CD14-positive monocyte (primary cell): ENCODE measurements at regions of chr7 and their contacts with region 1.

Region 1: GRCh38 chr7:131107337-131108211 is 220.1 kb upstream of the MKLN1 start:
- DNase-seq: peak; percentile 80 to 86 (median 84)
- H3K4me3 ChIP-seq: peak overlapping the region; percentile 83 to 100 (median 99)
- H3K4me3 Mint-ChIP-seq: peak overlapping the region; percentile 99
- H3K27ac ChIP-seq: peak overlapping the region; percentile 93 to 95
- H3K27ac Mint-ChIP-seq: peak overlapping the region; percentile 92 to 99 (median 98)
- H3K4me1 ChIP-seq: peaks cover 45 to 54% of the 10 kb centered on the region in 2 donors
- H3K4me1 Mint-ChIP-seq: peaks cover 58% of the 10 kb centered on the region
- H3K27me3 ChIP-seq: peaks cover 0 to 10% of the 10 kb centered on the region in 2 donors
- H3K27me3 Mint-ChIP-seq: peaks cover 4 to 17% (median 11%) of the 10 kb centered on the region in 3 donors
- CTCF ChIP-seq: no peak

Region 2: GRCh38 chr7:130951303-130951975 is 156.1 kb before region 1 on chr7:
- intact Hi-C with region 1: no loop called
- DNase-seq: no peak
- H3K4me3 ChIP-seq: no peak overlapping the region
- H3K4me3 Mint-ChIP-seq: no peak overlapping the region
- H3K27ac ChIP-seq: no peak overlapping the region
- H3K27ac Mint-ChIP-seq: peak overlapping the region in 1 of 7 donors; percentile 9
- H3K4me1 ChIP-seq: peaks cover under 1 to 3% of the 10 kb centered on the region in 2 donors
- H3K4me1 Mint-ChIP-seq: peaks cover 13% of the 10 kb centered on the region
- H3K27me3 ChIP-seq: no peaks in the 10 kb centered on the region
- H3K27me3 Mint-ChIP-seq: no peaks in the 10 kb centered on the region
- CTCF ChIP-seq: no peak

Region 3: DNA sequence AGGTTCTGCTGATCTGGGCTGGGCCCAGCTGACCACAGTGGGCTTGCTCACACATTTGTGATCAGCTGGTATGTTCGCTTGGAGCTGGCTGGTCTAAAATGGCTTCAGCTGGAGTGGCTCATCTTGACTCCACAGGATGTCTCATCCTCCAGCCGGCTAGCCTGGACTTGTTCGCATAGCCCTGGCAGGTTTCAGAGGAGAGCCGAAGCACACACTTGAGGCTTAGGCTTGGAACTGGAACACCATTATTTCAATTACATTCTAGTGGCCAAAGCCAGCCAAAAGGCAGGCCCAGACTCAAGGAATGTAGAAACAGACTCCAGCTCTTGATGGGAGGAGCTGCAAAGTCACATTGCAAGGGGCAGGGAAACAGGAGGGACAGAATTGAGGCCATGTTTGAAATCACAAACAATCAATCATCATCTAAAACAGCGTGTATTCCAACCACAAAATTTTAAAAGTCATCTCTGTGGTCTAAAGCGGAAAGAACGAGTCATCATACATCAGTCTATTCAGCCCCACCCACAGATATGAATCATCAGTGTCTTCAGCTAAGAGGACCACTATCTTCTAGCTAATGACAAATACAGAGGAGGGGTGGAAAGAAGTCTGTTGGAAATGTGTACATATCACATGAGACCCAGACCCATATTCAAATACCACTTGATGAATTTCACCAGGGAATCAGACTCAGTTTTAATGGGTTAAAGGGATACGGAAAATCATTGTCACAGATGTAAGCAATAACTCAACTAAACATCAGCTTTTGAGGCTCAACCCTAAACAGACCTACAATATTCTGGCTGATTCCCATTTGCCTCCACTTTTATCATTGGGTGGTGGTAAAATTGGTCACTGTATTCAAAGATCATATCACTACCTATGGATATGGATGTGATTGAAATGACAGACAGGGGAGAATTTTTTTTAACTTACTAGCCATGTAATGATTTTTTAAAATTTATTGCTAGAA is 81.1 kb after region 1 on chr7:
- intact Hi-C with region 1: loop called in 1 of 2 experiments (anchors 5 kb)
- DNase-seq: peak; percentile 91 to 98 (median 96)
- H3K4me3 ChIP-seq: no peak overlapping the region
- H3K4me3 Mint-ChIP-seq: peak overlapping the region in 1 of 2 donors; percentile 62
- H3K27ac ChIP-seq: peak overlapping the region; percentile 62 to 85
- H3K27ac Mint-ChIP-seq: peak overlapping the region; percentile 89 to 96 (median 94)
- H3K4me1 ChIP-seq: peaks cover 18 to 35% of the 10 kb centered on the region in 2 donors
- H3K4me1 Mint-ChIP-seq: peaks cover 37% of the 10 kb centered on the region
- H3K27me3 ChIP-seq: peaks cover 11 to 24% of the 10 kb centered on the region in 2 donors
- H3K27me3 Mint-ChIP-seq: peaks cover 28 to 40% (median 33%) of the 10 kb centered on the region in 3 donors
- CTCF ChIP-seq: no peak

Region 4: DNA sequence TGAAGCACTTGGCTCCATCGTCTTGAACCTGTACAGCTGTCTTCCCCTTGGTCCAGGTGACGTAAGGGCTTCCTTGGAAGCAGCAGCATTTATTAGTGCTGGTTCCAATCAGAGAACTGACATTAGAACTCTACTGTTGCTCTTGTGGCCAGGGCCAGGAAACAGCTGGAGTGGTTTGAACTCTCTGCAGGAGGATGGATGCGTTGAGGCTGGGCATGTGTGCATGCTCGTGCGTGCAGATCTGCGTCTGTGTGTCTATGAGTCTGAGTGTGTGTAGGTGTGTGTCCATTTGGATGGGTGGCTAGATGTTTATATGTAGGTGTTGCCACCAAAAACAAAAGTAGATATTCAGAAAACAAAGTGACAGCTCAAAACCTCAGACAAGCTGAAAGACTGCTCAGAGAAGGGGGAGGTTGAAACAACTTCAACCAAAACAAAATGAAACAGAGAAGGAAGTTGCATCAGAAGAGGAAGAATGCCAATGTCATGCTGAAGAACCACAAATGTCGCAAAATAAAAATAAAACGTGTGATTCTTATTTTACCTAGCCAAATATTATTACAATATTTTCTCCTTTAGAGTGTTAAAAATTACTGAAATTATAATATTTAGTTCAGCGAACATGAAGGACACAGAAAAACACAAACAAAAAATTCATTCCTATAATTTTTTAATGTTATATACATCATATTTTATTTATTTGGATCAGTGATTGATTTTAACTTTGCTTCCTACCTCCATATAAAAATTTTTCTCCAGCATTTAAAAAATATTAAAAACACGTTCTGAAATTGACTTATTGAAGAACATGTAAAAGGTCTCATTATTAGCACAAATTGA is 124.0 kb after region 1 on chr7:
- intact Hi-C with region 1: loop called (anchors 5 kb)
- DNase-seq: peak; percentile 67 to 85 (median 69)
- H3K4me3 ChIP-seq: peak overlapping the region; percentile 36 to 68 (median 39)
- H3K4me3 Mint-ChIP-seq: peak overlapping the region; percentile 60 to 88
- H3K27ac ChIP-seq: peak overlapping the region; percentile 95 to 96
- H3K27ac Mint-ChIP-seq: peak overlapping the region; percentile 95 to 100 (median 96)
- H3K4me1 ChIP-seq: peaks cover 28 to 46% of the 10 kb centered on the region in 2 donors
- H3K4me1 Mint-ChIP-seq: peaks cover 53% of the 10 kb centered on the region
- H3K27me3 ChIP-seq: no peaks in the 10 kb centered on the region
- H3K27me3 Mint-ChIP-seq: peaks cover 1 to 2% (median 2%) of the 10 kb centered on the region in 3 donors
- CTCF ChIP-seq: no peak

Region 5: DNA sequence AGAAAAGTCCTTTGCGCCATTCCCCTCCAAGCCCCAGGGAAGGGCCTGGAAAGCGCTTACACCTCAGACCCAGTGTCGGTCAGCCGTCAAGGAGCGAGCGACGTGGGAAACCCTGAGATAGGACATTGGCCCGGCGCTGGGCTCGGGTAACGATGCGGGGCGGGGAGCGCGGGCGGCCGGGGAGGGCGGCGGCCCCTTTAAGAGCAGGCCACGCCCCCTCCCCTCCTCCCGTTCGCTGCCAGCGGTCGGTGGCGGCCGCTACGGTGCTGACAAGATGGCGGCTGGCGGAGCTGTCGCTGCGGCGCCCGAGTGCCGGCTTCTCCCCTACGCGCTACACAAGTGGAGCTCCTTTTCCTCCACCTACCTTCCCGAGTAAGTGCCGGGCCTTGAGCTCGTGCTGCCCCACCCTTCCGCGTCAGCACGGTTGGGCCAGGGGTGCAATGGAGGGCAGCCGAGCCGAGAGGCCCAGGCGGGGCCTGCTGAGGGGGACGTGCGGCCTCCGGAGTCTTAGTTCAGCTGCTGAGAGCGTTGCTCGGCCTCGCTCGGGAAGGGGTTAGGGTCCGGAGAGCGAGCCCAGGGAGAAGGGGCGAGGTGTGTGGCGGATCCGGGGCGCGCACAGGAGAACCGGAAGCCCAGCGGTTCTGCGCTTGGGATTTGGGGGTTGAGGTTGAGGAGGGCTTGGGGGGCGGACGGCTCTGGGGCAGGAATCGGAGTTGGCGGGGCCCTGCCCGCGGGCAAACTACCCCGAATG is 220.2 kb after region 1 on chr7 and contains the start of gene MKLN1:
- intact Hi-C with region 1: loop called in 1 of 2 experiments (anchors 5 kb)
- DNase-seq: peak; percentile 82 to 89 (median 86)
- H3K4me3 ChIP-seq: peak within 1 kb of the TSS; percentile 69 to 98 (median 88)
- H3K4me3 Mint-ChIP-seq: peak within 1 kb of the TSS; percentile 99 to 100
- H3K27ac ChIP-seq: peak within 1 kb of the TSS; percentile 86 to 99
- H3K27ac Mint-ChIP-seq: peak within 1 kb of the TSS; percentile 96 to 100 (median 99)
- H3K4me1 ChIP-seq: peaks cover 30 to 37% of the 10 kb centered on the region in 2 donors
- H3K4me1 Mint-ChIP-seq: peaks cover 46% of the 10 kb centered on the region
- H3K27me3 ChIP-seq: no peaks in the 10 kb centered on the region
- H3K27me3 Mint-ChIP-seq: peaks cover 0 to 5% (median 0%) of the 10 kb centered on the region in 3 donors
- CTCF ChIP-seq: no peak
- polyA plus RNA-seq, gene MKLN1: 12.2 to 18.5 (median 17.2) TPM

Region 6: GRCh38 chr7:131424219-131424822 is 316.7 kb after region 1 on chr7:
- intact Hi-C with region 1: loop called in 1 of 2 experiments (anchors 10 kb)
- DNase-seq: peak; percentile 3 to 29 (median 7)
- H3K4me3 ChIP-seq: no peak overlapping the region
- H3K4me3 Mint-ChIP-seq: no peak overlapping the region
- H3K27ac ChIP-seq: no peak overlapping the region
- H3K27ac Mint-ChIP-seq: peak overlapping the region in 1 of 7 donors; percentile 6
- H3K4me1 ChIP-seq: no peaks in the 10 kb centered on the region
- H3K4me1 Mint-ChIP-seq: no peaks in the 10 kb centered on the region
- H3K27me3 ChIP-seq: no peaks in the 10 kb centered on the region
- H3K27me3 Mint-ChIP-seq: peaks cover 0 to 3% (median 3%) of the 10 kb centered on the region in 3 donors
- CTCF ChIP-seq: peak; percentile 32